ENCODE measurements at regions of chr1 and their contacts with region 1.

Region 1: DNA sequence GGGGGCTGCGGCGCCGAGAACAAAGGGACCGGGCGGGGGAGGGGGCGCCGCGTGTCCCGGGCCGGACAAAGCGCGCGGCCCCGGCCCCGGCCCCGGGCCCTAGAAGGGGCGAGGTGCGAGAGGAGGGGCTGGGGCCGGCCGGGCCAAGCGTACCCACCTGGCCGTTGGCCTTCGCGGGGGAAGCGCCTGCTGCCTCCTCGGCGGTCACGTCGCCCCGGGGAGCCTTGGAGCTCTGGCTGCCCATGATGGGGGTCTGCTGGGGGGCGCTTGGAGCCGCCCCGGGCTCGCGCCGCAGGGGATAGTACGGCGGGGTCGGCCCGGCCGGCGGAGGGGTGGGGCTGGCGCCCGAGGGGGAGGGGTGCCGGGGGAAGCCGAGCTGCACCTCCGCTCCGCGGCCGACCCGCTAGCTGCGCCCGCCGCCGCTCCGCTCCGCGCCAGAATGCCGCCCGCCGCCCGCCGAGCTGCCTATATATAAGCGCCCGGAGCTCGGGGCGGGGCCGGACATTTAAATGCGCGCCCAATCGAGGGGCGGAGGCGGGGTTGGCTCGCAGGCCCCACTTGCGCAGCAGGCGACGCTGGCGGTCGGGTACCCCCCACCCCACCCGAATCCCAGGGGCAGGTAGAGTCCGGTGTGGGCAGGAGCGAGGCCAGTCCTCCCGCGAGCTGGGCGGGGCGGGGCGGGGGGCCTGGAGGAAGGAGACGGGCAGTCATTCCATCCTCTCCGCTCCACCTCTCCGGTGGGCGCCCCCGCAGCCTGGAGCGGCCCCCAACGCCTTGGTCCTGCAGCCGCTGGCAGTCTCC is at the start of gene MARCKSL1:
- DNase-seq: peak; percentile 96
- H3K4me3 ChIP-seq: peak within 1 kb of the TSS; percentile 84 to 92
- H3K27ac ChIP-seq: peak within 1 kb of the TSS; percentile 36 to 81; a peak in 3 of 4 replicates
- H3K4me1 ChIP-seq: peaks cover 8 to 31% of the 10 kb centered on the region in 2 experiments; a peak in 3 of 4 replicates
- H3K27me3 ChIP-seq: no peaks in the 10 kb centered on the region
- CTCF ChIP-seq: no peak
- EP300 ChIP-seq: no peak
- RAD21 ChIP-seq: no peak
- polyA plus RNA-seq, gene MARCKSL1: 254 and 275 TPM in 2 replicates

Region 2: DNA sequence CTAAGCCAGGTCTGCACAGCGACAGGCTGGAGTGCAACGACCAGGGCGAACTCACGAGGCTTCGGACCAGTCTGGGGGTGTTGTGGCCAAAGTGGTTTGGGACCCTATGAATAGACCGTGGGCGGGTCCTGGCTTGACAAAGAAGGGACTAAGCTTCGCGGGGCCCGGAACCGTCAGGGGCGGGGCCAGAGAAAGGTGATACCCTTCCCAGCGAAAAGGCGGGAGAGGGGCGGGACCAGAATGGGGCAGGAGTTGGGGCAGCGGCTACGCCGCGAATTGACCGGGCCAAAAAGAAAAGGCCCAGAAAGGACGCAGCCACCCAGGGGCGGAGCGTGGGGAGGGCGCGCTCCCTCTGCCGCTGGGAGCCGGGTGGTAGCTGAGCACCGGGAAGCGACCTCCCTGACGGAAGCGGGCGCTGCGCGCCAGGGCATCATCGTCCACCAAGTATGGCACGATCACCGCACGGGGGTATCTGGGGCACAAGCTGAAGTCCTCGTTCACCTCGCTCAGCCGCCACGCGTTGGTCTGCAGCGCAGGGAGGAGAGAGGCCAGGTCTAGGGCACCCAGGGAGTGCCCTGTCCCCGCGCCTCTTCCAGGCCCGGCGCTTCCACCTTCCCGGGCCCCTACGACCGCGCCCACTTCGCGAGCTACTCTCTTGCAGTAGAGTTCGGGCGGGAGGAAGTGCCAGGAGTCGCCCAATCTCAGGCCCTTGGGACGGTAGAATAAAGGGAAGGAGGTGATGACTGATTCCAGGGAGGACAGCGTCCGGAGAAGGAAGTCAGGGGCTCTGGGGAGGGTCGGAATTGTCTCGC is 95.6 kb before region 1 on chr1:
- CTCF ChIA-PET with region 1: interaction called, 5 read pairs
- POLR2A ChIA-PET with region 1: interaction called, 14 read pairs
- DNase-seq: peak; percentile 89
- H3K4me3 ChIP-seq: peak overlapping the region; percentile 51 to 57
- H3K27ac ChIP-seq: no peak overlapping the region; a peak in 1 of 4 replicates
- H3K4me1 ChIP-seq: peaks cover 12 to 13% of the 10 kb centered on the region in 2 experiments; a peak in 2 of 4 replicates
- H3K27me3 ChIP-seq: no peaks in the 10 kb centered on the region
- CTCF ChIP-seq: peak; percentile 24
- EP300 ChIP-seq: no peak
- RAD21 ChIP-seq: peak; percentile 27

Region 3: GRCh38 chr1:32291708-32292492 is 44.1 kb before region 1 on chr1 and contains the start of gene HDAC1:
- CTCF ChIA-PET with region 1: no interaction called
- POLR2A ChIA-PET with region 1: interaction called, 11 read pairs
- DNase-seq: peak; percentile 99
- H3K4me3 ChIP-seq: peak within 1 kb of the TSS; percentile 71 to 98
- H3K27ac ChIP-seq: peak within 1 kb of the TSS; percentile 51 to 67; a peak in 3 of 4 replicates
- H3K4me1 ChIP-seq: peaks cover 0 to 8% of the 10 kb centered on the region in 2 experiments; a peak in 2 of 4 replicates
- H3K27me3 ChIP-seq: no peaks in the 10 kb centered on the region
- CTCF ChIP-seq: no peak
- EP300 ChIP-seq: peak in 1 of 2 experiments; percentile 67; a peak in 1 of 4 replicates
- RAD21 ChIP-seq: no peak
- polyA plus RNA-seq, gene HDAC1: 172 and 226 TPM in 2 replicates

Region 4: GRCh38 chr1:32351399-32352238 is 15.6 kb after region 1 on chr1:
- CTCF ChIA-PET with region 1: interaction called, 24 read pairs
- POLR2A ChIA-PET with region 1: interaction called, 24 read pairs
- DNase-seq: peak; percentile 100
- H3K4me3 ChIP-seq: peak overlapping the region; percentile 62 to 84
- H3K27ac ChIP-seq: peak overlapping the region; percentile 79 to 90
- H3K4me1 ChIP-seq: peaks cover 4 to 9% of the 10 kb centered on the region in 2 experiments; a peak in 2 of 4 replicates
- H3K27me3 ChIP-seq: no peaks in the 10 kb centered on the region
- CTCF ChIP-seq: peak; percentile 24; the same call in 1 of the 2 replicates
- EP300 ChIP-seq: no peak
- RAD21 ChIP-seq: no peak